Esophagus squamous epithelium (tissue), 5 donors: ENCODE measurements at regions of chr7 and their contacts with region 1.

Region 1: DNA sequence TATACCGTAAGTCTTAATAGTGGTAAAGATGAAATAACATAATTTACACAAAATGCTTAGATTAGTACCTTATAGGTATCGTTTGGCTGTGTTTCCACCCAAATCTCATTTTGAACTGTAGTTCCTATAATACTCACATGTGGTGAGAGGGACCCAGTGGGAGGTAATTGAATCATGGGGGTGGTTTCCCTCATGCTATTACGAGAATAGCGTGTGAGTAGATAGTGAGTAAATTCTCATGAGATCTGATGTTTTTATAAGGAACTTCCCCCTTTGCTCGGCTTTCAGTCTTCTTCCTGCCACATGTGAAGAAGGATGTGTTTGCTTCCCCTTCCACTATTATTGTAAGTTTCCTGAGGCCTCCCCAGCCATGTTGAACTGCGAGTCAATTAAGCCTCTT is 426.3 kb upstream of the POT1 start:
- DNase-seq: no peak
- H3K4me3 ChIP-seq: no peak overlapping the region
- H3K27ac ChIP-seq: no peak overlapping the region
- H3K4me1 ChIP-seq: no peaks in the 10 kb centered on the region
- H3K27me3 ChIP-seq: no peaks in the 10 kb centered on the region
- CTCF ChIP-seq: no peak
- POLR2A ChIP-seq: no peak

Region 2: GRCh38 chr7:125299003-125299765 is 56.7 kb before region 1 on chr7:
- intact Hi-C with region 1: loop called (anchors 10 kb)
- DNase-seq: no peak
- H3K4me3 ChIP-seq: no peak overlapping the region
- H3K27ac ChIP-seq: no peak overlapping the region
- H3K4me1 ChIP-seq: no peaks in the 10 kb centered on the region
- H3K27me3 ChIP-seq: no peaks in the 10 kb centered on the region
- CTCF ChIP-seq: no peak
- POLR2A ChIP-seq: no peak

Region 3: DNA sequence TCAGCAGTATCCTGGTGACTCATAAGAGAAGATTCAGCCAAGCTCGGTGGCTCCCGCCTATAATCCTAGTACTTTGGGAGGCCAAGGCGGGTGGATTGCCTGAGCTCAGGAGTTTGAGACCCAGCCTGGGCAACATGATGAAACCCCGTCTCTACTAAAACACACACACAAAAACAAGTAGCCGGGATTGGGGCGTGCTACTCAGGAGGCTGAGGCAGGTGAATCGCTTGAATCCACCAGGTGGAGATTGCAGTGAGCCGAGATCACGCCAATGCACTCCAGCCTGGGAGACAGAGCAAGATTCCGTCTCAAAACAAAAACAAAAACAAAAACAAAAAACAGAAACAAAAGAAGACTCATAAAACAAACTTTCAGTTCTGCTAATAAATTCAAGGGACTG is 124.9 kb after region 1 on chr7:
- intact Hi-C with region 1: no loop called
- DNase-seq: no peak
- H3K4me3 ChIP-seq: no peak overlapping the region
- H3K27ac ChIP-seq: no peak overlapping the region
- H3K4me1 ChIP-seq: no peaks in the 10 kb centered on the region
- H3K27me3 ChIP-seq: no peaks in the 10 kb centered on the region
- CTCF ChIP-seq: no peak
- POLR2A ChIP-seq: no peak

Region 4: DNA sequence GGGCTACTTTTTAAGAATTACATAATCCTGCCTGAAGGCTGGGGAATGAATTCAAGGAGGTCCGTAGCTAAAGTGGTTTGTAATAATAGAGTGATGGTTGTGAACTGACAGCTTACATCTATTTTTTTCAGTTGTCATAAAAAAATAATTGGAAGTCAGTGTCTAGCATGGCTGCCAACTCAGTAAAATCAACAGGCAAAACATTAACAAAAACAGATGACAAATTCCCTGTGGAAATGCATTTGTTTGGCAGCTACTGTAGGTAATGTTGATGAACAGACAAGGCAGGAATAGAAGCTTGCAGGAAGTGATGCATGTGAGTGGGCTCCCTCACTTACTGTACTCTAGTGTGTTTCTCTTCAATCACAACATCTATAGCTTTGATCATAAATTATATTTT is 339.7 kb after region 1 on chr7:
- intact Hi-C with region 1: no loop called
- DNase-seq: no peak
- H3K4me3 ChIP-seq: no peak overlapping the region
- H3K27ac ChIP-seq: no peak overlapping the region
- H3K4me1 ChIP-seq: no peaks in the 10 kb centered on the region
- H3K27me3 ChIP-seq: no peaks in the 10 kb centered on the region
- CTCF ChIP-seq: no peak
- POLR2A ChIP-seq: no peak